HEK293 (cell line): ENCODE measurements at regions of chr5 and their contacts with region 1.

Region 1: GRCh38 chr5:97162045-97162444 is 19.6 kb upstream of the LIX1 start:
- H3K4me3 ChIP-seq: no peak overlapping the region
- H3K27ac ChIP-seq: no peak overlapping the region
- H3K4me1 ChIP-seq: no peaks in the 10 kb centered on the region
- CTCF ChIP-seq: 0 out of 2 replicates have a peak, but pooled peaks have one; percentile 60

Region 2: DNA sequence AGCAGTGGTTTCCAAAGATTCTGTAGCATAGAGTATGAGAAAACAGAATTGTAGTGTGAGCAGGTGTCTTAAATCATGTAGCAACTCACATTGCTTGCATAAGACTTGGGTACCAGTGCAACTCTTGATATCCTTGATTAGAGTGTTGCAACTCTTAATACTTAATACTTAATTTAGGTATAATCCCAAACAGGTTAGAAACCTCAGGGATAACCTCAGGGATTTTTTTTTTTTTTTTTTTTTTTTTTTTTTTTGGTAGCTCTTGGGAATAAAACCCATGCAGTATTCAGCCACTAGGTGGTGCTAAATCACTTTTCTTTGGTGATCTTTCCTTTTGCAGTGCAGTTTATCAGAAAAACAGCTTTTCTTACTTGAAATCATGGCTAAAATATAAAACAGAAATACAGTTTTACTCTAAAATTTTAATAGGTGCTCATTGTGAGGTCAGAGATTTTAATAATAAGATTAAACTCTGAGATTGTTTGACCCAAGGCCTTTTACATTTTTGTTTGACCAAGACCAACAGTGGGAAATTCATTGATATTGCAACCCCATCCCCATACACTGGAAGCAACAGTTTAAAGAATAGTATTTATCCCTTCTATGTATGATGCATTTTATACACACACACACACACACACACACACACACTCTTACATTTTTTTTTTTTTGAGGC is 409.6 kb before region 1 on chr5:
- CTCF ChIA-PET with region 1: interaction called, 32 read pairs
- POLR2A ChIA-PET with region 1: no interaction called
- H3K4me3 ChIP-seq: no peak overlapping the region
- H3K27ac ChIP-seq: no peak overlapping the region
- H3K4me1 ChIP-seq: no peaks in the 10 kb centered on the region
- CTCF ChIP-seq: peak; percentile 29; the same call in 1 of the 2 replicates

Region 3: GRCh38 chr5:96807075-96807654 is 354.9 kb before region 1 on chr5:
- CTCF ChIA-PET with region 1: interaction called, 12 read pairs
- POLR2A ChIA-PET with region 1: no interaction called
- H3K4me3 ChIP-seq: peak overlapping the region; percentile 76
- H3K27ac ChIP-seq: peak overlapping the region; percentile 99
- H3K4me1 ChIP-seq: no peaks in the 10 kb centered on the region; the same call in 1 of the 2 replicates
- CTCF ChIP-seq: no peak

Region 4: DNA sequence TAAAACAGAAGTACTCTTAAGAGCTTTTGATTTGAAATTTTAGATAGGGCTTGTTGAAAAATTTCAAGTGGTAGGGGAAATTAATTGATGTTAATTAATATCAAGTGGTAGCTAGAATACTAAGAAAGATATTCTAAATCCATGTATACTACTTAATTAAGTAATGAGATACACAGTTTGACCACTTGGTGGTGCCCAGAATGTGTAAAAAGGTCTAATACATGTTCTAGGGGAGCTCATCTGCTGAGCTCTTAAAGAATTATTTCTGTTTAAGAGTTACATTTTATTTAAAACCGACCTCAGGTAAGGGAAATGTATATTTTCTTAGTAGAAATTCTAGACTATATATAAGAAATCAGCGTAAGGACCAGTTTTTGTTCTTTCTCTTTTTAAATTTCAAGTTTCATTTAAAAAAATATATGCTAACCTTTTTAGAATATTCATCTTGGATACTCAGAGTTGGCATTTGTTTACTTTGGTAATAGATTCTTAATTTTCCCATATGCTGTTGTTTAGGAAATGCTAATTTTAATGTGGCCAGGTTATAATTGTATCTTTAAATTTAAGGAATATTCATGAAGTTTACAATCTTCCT is 164.7 kb before region 1 on chr5:
- CTCF ChIA-PET with region 1: interaction called, 24 read pairs
- POLR2A ChIA-PET with region 1: no interaction called
- H3K4me3 ChIP-seq: no peak overlapping the region
- H3K27ac ChIP-seq: no peak overlapping the region
- H3K4me1 ChIP-seq: no peaks in the 10 kb centered on the region
- CTCF ChIP-seq: no peak

Region 5: DNA sequence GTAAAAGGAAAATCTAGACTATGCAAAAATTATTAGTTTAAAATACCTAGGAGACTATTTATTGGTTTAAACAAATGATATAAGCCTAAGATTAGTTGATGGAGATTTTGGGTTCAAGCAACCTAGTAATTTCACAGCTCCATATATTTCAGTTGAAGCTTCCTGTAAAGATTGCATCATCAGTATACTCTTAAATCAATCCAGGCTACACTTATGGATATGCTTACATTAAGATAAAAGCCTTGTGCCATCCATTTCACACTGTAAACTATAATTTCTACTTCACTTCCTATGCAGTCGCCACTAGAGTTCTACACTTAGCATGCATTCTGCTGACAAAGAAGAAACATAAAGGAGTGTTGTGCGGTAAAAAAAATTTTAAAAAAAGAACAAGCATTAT is 12.3 kb before region 1 on chr5:
- CTCF ChIA-PET with region 1: interaction called, 30 read pairs
- POLR2A ChIA-PET with region 1: no interaction called
- H3K4me3 ChIP-seq: no peak overlapping the region
- H3K27ac ChIP-seq: no peak overlapping the region
- H3K4me1 ChIP-seq: peaks cover 5% of the 10 kb centered on the region; the same call in 1 of the 2 replicates
- CTCF ChIP-seq: no peak

Region 6: DNA sequence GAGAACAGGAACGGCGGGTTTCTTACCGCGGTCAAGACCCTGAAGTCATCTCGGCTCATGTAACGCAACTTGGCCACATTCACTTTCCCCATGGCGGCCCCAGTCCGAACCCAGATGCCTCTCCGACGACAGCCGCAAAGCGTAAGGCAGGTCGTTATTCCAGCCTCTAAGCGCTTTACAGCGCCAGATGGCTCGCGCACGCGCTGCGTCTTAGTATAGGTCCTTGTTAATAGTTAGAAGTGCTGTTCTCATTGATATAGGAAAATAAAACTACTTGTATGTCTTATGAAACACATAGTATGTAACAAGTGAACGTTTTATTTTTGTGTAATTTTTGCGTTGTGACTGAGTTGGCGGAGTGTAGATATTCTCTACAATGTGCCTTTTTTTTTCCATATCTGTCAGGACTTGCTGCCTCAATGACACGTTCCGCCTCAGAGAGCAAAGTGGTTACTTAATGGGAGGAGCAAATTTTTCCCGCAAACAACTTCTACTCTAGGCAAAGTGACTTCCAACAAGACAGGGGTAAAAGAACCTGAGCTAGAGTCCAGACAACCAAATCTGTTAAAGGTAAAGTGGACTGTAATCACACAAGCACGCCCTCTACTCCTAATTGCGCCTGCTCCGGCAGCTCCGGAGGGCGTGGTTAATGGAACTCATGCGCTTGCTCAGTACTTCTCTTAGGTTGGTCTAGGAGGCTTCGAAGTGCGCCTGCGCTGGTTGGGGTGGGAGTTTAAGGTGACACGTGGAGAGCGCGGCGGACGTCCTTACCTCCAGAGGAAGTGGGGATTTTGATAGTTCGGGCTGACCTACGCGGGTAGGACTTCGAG is 21.3 kb after region 1 on chr5 and contains the start of gene RIOK2:
- CTCF ChIA-PET with region 1: interaction called, 13 read pairs
- POLR2A ChIA-PET with region 1: no interaction called
- H3K4me3 ChIP-seq: peak within 1 kb of the TSS; percentile 90
- H3K27ac ChIP-seq: peak within 1 kb of the TSS; percentile 87
- H3K4me1 ChIP-seq: peaks cover 2% of the 10 kb centered on the region
- CTCF ChIP-seq: no peak